ENCODE measurements at regions of chr7 and their contacts with region 1.

Region 1: DNA sequence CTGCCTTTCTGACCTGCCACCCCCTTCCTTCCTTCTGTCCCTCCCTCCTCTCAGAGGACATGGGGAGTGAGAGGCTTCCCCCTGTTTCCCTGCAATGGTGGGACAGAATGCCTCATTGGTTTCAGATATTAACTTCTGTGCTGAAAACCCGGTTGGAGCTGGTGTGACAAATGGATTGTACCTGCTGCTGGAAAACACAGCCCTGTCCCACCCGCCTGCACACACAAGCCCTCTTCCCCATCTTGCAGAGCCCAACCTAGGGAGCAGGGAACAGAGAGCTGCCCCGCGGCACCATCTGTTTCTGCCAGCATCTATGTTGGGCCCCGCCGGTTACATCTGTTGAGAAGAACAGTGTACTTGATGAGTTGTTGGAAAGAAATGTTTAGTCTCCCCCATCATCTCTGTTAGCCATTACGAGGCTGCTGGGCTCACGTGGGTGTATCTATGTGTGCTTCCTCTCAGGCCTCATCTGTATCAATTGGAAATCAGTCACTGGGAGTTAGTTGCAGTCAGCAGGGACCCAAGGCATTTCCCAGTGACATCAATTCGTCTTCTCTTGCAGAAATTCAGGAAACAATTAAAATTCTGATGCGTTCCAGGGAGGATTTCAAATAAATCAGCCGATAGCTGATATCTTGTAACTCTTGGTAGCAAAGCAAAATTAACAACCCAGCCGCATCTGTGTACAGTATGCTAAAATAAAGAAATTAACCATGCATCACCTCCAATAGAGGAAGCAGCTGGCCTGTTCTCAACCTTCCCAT is 725.6 kb upstream of the GALNT17 start:
- DNase-seq: no peak
- ATAC-seq: no peak
- H3K4me3 Mint-ChIP-seq: peak overlapping the region; percentile 8
- H3K27ac Mint-ChIP-seq: peak overlapping the region; percentile 9
- H3K4me1 Mint-ChIP-seq: peaks cover 63% of the 10 kb centered on the region
- H3K27me3 Mint-ChIP-seq: no peaks in the 10 kb centered on the region
- CTCF ChIP-seq: no peak

Region 2: DNA sequence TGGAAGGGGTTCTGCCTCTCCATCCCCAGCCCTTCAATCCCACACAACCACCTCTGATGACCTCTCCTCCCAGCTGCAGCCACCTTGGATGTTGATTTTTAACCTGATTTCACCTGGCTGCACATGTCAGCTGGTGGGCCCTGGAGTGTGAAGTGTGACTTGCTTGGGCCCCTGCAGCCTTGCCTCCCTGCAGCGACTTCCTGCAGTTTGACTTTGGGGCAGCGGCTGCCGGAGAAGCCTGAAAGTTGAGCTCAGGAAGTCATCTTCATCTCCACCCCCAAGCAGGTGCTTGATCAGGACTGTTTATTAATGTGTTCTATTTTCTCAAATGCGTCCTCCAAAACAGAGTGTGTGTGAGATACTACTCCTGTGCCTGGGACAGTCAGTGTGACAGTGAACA is 50.4 kb after region 1 on chr7:
- CTCF ChIA-PET with region 1: no interaction called
- POLR2A ChIA-PET with region 1: no interaction called
- intact Hi-C with region 1: loop called (anchors 5 kb)
- DNase-seq: no peak
- ATAC-seq: peak; percentile 34
- H3K4me3 Mint-ChIP-seq: peak overlapping the region; percentile 52
- H3K27ac Mint-ChIP-seq: peak overlapping the region; percentile 80
- H3K4me1 Mint-ChIP-seq: peaks cover 51% of the 10 kb centered on the region
- H3K27me3 Mint-ChIP-seq: no peaks in the 10 kb centered on the region
- CTCF ChIP-seq: no peak

Region 3: DNA sequence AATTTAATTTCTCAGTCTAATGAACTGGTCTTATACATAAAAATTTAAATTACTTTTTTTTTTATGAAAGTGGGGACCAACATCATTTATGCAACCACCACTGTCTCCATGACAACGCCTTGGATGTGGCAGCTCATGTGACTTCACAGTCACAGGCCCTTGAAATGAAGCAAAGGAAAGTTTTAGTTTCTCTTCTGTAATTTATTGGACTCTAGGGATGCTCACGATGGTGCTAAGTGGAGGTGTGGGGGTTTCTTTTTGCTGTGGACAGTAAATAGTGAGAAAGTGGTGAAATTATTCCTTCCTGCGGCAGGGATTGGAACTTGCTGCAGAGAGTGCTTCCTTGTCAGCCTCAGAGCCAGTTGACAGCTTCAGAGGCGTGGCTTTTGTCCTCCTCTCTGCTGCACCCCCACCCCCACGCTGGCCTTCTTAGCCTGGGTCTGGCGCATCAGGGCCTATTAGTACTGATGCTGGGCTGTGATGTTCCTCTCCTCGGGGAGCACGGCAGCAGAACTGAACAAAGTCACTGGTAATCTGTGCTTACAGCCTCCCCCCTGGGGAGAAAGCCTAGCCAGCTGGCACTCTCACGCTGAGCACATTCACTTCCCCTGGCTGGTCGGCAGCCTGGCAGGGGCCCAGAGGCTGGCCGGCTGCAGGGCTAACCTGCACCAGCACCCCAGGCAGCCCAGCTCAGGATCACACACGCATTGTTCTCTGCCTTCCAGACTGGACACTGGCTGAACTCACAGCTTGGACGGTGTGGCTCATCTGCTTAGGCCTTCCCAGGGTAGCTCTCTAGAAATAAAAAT is 208.1 kb after region 1 on chr7:
- CTCF ChIA-PET with region 1: no interaction called
- POLR2A ChIA-PET with region 1: no interaction called
- intact Hi-C with region 1: loop called (anchors 5 kb)
- DNase-seq: peak; percentile 16
- ATAC-seq: peak; percentile 76
- H3K4me3 Mint-ChIP-seq: peak overlapping the region; percentile 13
- H3K27ac Mint-ChIP-seq: peak overlapping the region; percentile 68
- H3K4me1 Mint-ChIP-seq: peaks cover 18% of the 10 kb centered on the region
- H3K27me3 Mint-ChIP-seq: no peaks in the 10 kb centered on the region
- CTCF ChIP-seq: no peak

Measured in activated B cell treated with CpG ODN at 0.5 μM for 24 hours (primary cell).